Activated CD4-positive, alpha-beta T cell treated with anti-CD3 and anti-CD28 coated beads, Interleukin-2, amount 10 ng/mL, durations not matched to agents 24 days and 14 days (primary cell): ENCODE measurements at regions of chr6 and their contacts with region 1.

Region 1: DNA sequence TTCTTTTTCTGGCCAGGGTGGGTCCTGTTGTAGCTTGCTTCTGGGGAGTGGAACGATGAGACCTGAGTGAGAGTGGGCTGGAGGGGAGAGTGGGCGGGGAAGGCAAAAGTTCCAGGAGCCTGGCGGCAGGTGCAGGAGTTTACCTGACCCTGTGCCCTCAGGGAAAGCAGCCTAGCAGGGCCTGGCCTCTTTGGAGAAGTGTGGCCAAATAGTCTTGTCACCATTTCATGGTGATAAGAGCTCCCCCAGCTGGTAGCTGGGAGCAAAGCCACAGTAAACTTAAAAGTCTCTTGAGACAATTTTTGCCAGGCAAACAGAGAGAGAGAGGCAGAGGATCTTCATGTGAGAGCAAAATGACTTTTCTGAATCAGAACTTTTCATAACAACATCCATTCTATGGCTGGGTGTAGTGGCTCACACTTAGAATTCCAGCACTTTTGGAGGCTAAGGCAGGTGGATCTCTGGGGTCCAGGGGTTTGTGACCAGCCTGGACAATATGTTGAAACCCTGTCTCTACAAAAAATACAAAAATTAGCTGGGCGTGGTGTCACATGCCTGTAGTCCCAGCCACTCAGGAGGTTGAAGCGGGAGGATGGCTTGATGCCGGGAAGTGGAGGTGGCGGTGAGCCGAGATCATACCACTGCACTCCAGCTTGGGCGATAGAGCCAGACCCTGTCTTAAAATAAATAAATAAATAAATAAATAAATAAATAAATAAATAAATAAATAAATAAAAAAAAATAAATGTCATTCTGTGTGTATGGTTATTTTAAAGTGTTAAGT is 161.8 kb upstream of the SCGN start:
- DNase-seq: peak; percentile 91
- H3K4me3 Mint-ChIP-seq: no peak overlapping the region
- H3K27ac Mint-ChIP-seq: no peak overlapping the region
- H3K4me1 Mint-ChIP-seq: peaks cover 2% of the 10 kb centered on the region
- H3K27me3 Mint-ChIP-seq: no peaks in the 10 kb centered on the region

Region 2: DNA sequence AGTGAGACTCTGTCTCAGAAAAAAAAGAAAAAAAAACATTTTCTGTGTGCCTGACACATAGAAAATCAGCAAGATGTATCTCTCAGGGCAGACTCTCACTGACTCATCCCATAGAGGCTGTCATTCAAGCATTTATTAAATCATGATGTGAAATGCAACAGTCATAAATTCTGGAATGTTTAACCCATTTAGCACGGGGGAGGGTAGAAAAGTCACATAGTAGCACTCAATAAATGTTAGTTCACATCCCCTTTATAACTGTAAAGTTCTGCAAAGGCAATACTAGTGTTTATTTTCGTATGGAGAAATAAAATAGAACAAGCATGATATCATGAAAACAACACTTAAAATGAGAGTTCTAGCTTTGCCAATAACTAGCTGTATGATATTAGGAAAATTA is 226.6 kb before region 1 on chr6:
- intact Hi-C with region 1: loop called (anchors 1 kb)
- DNase-seq: no peak
- H3K4me3 Mint-ChIP-seq: no peak overlapping the region
- H3K27ac Mint-ChIP-seq: no peak overlapping the region
- H3K4me1 Mint-ChIP-seq: no peaks in the 10 kb centered on the region
- H3K27me3 Mint-ChIP-seq: peaks cover 22% of the 10 kb centered on the region

Region 3: GRCh38 chr6:25278914-25279747 is 211.1 kb before region 1 on chr6 and contains the start of gene CARMIL1:
- intact Hi-C with region 1: loop called (anchors 1 kb)
- DNase-seq: peak; percentile 92
- H3K4me3 Mint-ChIP-seq: peak within 1 kb of the TSS; percentile 86
- H3K27ac Mint-ChIP-seq: peak within 1 kb of the TSS; percentile 75
- H3K4me1 Mint-ChIP-seq: peaks cover 20% of the 10 kb centered on the region
- H3K27me3 Mint-ChIP-seq: peaks cover 22% of the 10 kb centered on the region
- total RNA-seq, gene CARMIL1: 1.4 and 1.6 TPM in 2 replicates

Region 4: GRCh38 chr6:25342802-25343201 is 147.4 kb before region 1 on chr6:
- intact Hi-C with region 1: no loop called
- DNase-seq: no peak
- H3K4me3 Mint-ChIP-seq: no peak overlapping the region
- H3K27ac Mint-ChIP-seq: no peak overlapping the region
- H3K4me1 Mint-ChIP-seq: peaks cover 2% of the 10 kb centered on the region
- H3K27me3 Mint-ChIP-seq: peaks cover 6% of the 10 kb centered on the region

Region 5: DNA sequence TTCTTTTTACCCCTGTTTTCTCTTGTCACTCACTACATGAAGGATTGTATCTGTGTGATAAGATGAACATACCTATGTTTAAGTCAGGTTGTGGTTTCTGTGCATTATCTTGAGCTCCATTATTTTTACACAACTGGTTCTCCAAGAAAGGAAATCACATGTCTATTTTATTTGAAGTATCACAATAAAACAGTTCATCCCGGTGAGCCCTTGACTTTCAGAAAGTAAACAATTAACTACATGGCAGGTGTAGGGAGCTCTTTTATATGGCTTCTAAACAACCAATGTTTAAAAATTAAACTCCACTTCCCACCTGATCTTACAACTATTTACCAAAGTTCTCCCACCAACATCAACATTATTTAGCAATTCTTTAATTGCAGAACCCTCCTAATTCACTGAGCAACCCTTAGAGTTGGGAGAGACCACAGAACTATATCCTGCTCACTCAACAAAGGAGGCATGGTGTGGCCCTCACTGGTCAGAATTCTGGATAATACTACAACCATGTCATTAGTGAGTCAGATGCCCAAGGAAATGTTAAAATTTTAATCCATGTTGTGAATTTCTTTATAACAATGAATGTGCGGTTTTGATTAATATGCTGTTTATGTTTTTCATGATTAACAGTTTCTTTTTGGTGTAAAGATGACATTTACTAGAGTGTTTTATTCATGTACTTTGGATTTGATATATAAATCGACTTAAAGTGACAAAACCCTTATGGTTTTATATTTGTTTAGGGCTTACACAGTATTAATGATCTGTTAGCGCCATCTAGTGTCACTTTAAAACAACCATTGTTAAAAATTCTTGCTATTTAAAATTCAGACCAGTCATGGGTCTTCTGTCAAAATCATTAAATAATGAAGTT is 111.8 kb after region 1 on chr6:
- intact Hi-C with region 1: loop called (anchors 10 kb)
- DNase-seq: no peak
- H3K4me3 Mint-ChIP-seq: no peak overlapping the region
- H3K27ac Mint-ChIP-seq: no peak overlapping the region
- H3K4me1 Mint-ChIP-seq: peaks cover 2% of the 10 kb centered on the region
- H3K27me3 Mint-ChIP-seq: no peaks in the 10 kb centered on the region